H1 (cell line): ENCODE measurements at regions of chr11 and their contacts with region 1.

Region 1: GRCh38 chr11:62612366-62613290 is at the starts of genes EML3 and ROM1:
- DNase-seq: peak; percentile 85 to 94
- H3K4me3 ChIP-seq: peak within 1 kb of the TSS; percentile 48 to 73 (median 58)
- H3K27ac ChIP-seq: no peak within 1 kb of the TSS
- H3K4me1 ChIP-seq: peaks cover 0 to 19% (median 12%) of the 10 kb centered on the region in 4 experiments; a peak in 6 of 7 replicates
- H3K27me3 ChIP-seq: peaks cover 0 to 3% (median 2%) of the 10 kb centered on the region in 4 experiments; a peak in 1 of 7 replicates
- CTCF ChIP-seq: peak; percentile 65 to 100 (median 87)
- EP300 ChIP-seq: no peak
- POLR2A ChIP-seq: no peak; a peak in 1 of 3 replicates
- RAD21 ChIP-seq: peak; percentile 23 to 47; a peak in 3 of 4 replicates
- total RNA-seq, gene EML3: 29.9 and 31.2 TPM in 2 replicates
- total RNA-seq, gene ROM1: 0.55 and 2.2 TPM in 2 replicates

Region 2: DNA sequence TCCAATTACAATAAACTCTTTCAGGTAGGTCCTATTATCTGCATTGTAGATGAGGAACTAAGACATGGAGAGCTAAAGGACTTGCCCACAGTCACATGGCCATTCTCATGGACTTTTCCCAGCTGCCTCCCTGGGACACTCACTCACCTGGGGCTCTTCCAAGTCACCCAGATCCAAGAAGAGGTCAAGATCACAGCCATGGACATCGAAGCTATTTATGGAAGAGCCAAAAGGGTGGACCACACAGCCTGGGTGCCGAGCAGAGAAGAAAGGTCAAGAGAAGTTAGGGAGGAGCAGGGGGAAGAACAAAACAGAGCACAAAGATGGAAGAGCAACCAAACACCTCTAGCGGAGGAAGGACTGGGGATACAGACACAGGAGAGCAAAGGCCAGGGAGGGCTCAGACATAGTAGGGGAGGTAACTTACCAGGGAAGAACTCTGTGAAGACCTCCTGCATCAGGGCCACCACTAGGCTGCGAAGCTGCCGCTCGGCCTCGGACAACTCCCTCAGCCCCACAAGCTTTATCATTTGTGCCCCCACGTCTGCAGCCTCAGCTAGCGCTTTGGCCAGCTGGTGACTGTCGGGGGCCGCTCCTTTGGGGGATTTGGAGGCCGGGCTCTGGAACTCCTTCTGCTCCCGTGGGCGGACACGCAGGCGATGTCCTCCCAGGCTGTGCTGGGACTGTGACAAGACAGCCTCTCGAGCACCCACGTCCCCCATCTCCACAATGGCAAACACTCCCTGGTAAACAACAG is 31.5 kb before region 1 on chr11:
- CTCF ChIA-PET with region 1: no interaction called
- POLR2A ChIA-PET with region 1: no interaction called
- DNase-seq: no peak
- H3K4me3 ChIP-seq: no peak overlapping the region
- H3K27ac ChIP-seq: no peak overlapping the region
- H3K4me1 ChIP-seq: no peaks in the 10 kb centered on the region
- H3K27me3 ChIP-seq: no peaks in the 10 kb centered on the region
- CTCF ChIP-seq: no peak
- EP300 ChIP-seq: no peak
- POLR2A ChIP-seq: no peak
- RAD21 ChIP-seq: no peak

Region 3: GRCh38 chr11:62645956-62646824 is 33.6 kb after region 1 on chr11 and contains the start of gene GANAB:
- CTCF ChIA-PET with region 1: interaction called, 14 read pairs
- POLR2A ChIA-PET with region 1: interaction called, 9 read pairs
- DNase-seq: peak; percentile 87 to 96
- H3K4me3 ChIP-seq: peak within 1 kb of the TSS; percentile 71 to 99 (median 90)
- H3K27ac ChIP-seq: peak within 1 kb of the TSS; percentile 90
- H3K4me1 ChIP-seq: no peaks in the 10 kb centered on the region; a peak in 2 of 7 replicates
- H3K27me3 ChIP-seq: no peaks in the 10 kb centered on the region
- CTCF ChIP-seq: no peak
- EP300 ChIP-seq: no peak
- POLR2A ChIP-seq: peak; percentile 82 to 99
- RAD21 ChIP-seq: no peak
- total RNA-seq, gene GANAB: 326 and 330 TPM in 2 replicates

Region 4: GRCh38 chr11:62737196-62737595 is 124.6 kb after region 1 on chr11:
- CTCF ChIA-PET with region 1: no interaction called
- POLR2A ChIA-PET with region 1: no interaction called
- DNase-seq: no peak
- H3K4me3 ChIP-seq: no peak overlapping the region
- H3K27ac ChIP-seq: no peak overlapping the region
- H3K4me1 ChIP-seq: no peaks in the 10 kb centered on the region
- H3K27me3 ChIP-seq: no peaks in the 10 kb centered on the region
- CTCF ChIP-seq: no peak
- EP300 ChIP-seq: no peak
- POLR2A ChIP-seq: no peak
- RAD21 ChIP-seq: no peak